Heart left ventricle (tissue), 16 donors: ENCODE measurements at regions of chr12 and their contacts with region 1.

Region 1: DNA sequence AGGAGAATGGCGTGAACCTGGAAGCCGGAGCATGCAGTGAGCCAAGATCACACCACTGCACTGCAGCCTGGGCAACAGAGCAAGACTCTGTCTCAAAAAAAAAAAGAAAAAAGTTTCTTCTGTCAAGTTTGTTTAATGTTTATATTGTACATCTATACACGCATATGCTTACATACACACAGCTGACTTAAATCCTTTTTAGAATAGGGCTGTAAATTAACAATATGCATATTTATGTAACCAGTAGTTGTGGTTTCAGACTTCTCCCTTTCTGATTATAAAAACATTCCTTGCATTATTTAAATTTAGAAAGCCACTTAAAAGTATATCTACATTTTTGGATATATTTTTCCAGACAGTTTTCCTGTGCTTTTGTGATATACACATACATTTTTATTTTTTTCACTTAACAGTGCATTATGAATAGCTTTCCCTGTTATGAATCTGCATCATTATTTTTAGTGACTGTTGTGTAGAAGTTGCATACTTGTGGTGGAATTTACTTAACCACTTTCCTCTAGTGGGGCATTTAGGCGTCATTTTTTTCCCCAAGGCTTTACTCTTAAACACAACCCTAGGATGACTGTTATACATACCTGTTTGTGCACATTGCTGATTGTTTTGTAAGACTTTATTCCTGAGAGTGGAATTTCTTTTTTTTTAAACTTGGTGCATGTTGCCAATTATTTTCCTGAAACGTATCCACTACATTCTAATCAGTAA is 29.4 kb downstream of the POLR3B start:
- DNase-seq: no peak
- ATAC-seq: no peak
- H3K4me3 ChIP-seq: no peak overlapping the region
- H3K27ac ChIP-seq: no peak overlapping the region
- H3K4me1 ChIP-seq: peaks cover 0 to 4% (median 0%) of the 10 kb centered on the region in 12 donors
- H3K27me3 ChIP-seq: no peaks in the 10 kb centered on the region
- CTCF ChIP-seq: no peak
- POLR2A ChIP-seq: no peak

Region 2: DNA sequence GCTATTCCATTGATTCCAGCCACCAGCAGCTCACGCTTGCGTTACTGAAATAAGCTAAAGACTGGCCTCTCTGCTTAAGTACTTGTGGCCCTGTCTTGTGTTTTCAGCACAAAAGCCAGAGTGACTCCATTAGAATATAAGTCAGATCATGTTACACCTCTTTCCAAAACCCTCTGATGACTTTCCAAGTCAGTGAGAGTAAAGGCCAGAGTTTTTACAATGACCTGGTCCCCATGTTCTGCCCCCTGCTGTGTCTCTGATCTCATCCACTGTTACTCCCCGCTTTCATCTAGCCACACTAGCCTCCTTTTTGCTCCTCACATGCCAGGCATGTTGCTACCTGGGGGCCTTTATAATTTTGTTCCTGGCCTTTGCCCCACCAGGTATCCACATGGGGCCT is 132.2 kb before region 1 on chr12:
- intact Hi-C with region 1: no loop called
- DNase-seq: no peak
- ATAC-seq: no peak
- H3K4me3 ChIP-seq: no peak overlapping the region
- H3K27ac ChIP-seq: no peak overlapping the region
- H3K4me1 ChIP-seq: peaks cover 0 to 2% (median 0%) of the 10 kb centered on the region in 12 donors
- H3K27me3 ChIP-seq: no peaks in the 10 kb centered on the region
- CTCF ChIP-seq: no peak
- POLR2A ChIP-seq: no peak

Region 3: GRCh38 chr12:106919910-106920544 is 533.1 kb after region 1 on chr12:
- intact Hi-C with region 1: loop called (anchors 2 to 5 kb)
- DNase-seq: no peak
- ATAC-seq: no peak
- H3K4me3 ChIP-seq: no peak overlapping the region
- H3K27ac ChIP-seq: no peak overlapping the region
- H3K4me1 ChIP-seq: peaks cover 0 to 6% (median 0%) of the 10 kb centered on the region in 12 donors
- H3K27me3 ChIP-seq: peaks cover 0 to 84% (median 0%) of the 10 kb centered on the region in 9 donors
- CTCF ChIP-seq: peak; percentile 68 to 91 (median 83)
- POLR2A ChIP-seq: no peak

Region 4: GRCh38 chr12:107101651-107102050 is 714.7 kb after region 1 on chr12:
- intact Hi-C with region 1: loop called in 7 of 10 experiments (anchors 5 to 10 kb)
- DNase-seq: no peak
- ATAC-seq: no peak
- H3K4me3 ChIP-seq: no peak overlapping the region
- H3K27ac ChIP-seq: no peak overlapping the region
- H3K4me1 ChIP-seq: no peaks in the 10 kb centered on the region
- H3K27me3 ChIP-seq: no peaks in the 10 kb centered on the region
- CTCF ChIP-seq: no peak
- POLR2A ChIP-seq: no peak

Region 5: GRCh38 chr12:107109741-107110719 is 723.1 kb after region 1 on chr12:
- intact Hi-C with region 1: loop called in 6 of 10 experiments (anchors 5 to 10 kb)
- DNase-seq: peak in 1 of 5 donors; percentile 31
- ATAC-seq: peak in 1 of 4 donors; percentile 38
- H3K4me3 ChIP-seq: peak overlapping the region in 3 of 12 donors; percentile 8 to 39 (median 30)
- H3K27ac ChIP-seq: peak overlapping the region in 1 of 12 donors; percentile 3
- H3K4me1 ChIP-seq: no peaks in the 10 kb centered on the region
- H3K27me3 ChIP-seq: no peaks in the 10 kb centered on the region
- CTCF ChIP-seq: no peak
- POLR2A ChIP-seq: no peak